Posterior vena cava (tissue), 2 donors: ENCODE measurements at regions of chr14 and their contacts with region 1.

Region 1: DNA sequence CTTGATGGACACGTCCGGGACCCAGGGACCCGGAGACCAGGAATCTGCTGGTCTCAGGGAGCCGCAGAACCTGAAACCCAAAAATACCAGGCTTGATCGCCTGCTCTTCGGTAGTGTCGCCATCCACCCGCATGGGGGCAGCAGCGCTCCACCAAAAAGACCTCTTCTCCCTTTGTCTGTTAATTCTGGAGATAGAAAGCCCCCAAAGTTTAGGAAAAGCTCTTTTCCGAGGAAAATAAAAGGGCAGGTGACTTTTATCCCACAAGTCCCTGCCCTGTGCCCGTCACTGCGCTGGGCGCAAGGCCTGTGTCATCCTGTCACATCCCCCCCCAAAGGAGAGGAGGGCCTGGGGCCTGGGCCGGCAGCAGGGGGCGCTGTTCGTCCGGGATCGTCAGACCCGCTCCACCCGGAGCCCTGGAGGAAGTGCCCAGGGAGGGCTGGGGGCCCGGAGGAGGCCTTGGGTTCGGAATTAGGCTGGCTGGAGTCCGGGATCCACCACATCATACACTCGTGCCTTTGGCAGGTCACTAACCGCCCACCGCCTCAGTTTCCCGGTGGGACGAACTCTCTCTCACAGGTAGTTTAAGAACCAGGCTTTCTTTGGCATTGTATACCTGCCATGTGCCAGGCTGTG is 31.9 kb downstream of the DAD1 start:
- DNase-seq: peak; percentile 96

Region 2: GRCh38 chr14:22715186-22715812 is 158.2 kb after region 1 on chr14:
- intact Hi-C with region 1: no loop called
- DNase-seq: no peak

Region 3: DNA sequence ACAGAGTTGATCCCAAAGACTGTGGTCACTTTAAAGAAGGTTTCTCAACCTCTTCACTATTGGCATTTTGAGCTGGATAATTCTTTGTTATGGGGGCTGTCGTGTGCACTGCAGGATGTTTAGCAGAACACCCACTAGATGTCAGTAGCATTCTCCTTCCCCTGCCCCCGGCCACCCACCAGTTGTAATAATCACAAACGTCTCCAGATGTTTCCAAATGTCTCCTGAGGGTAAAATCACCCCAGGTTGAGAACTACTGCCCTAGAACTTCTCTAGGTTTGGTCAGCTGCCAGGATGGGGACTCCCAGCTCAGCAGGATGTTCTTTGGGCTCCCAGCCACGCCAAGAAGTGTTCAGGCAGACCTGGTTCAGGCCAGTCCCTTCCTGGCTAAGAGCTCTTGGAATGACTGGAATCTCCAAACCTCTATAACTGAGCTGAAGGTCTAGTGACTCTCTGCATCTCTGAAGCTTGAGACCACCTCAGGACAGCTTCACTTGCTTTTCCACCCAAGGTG is 437.7 kb after region 1 on chr14:
- intact Hi-C with region 1: loop called in 1 of 2 experiments (anchors 10 kb)
- DNase-seq: no peak